Activated T-helper 1 cell treated with anti-CD3 and anti-CD28 coated beads, Interleukin-12 subunit alpha, Interleukin-12 subunit beta, Interleukin-2, Interleukin-4 antibody, amounts not matched to agents 30 ng/mL and 10 ng/mL and 1 ng/mL, durations not matched to agents 14 hours and 24 hours and 36 hours (primary cell): ENCODE measurements at regions of chr22 and their contacts with region 1.

Region 1: GRCh38 chr22:36180038-36180880 is 19.7 kb upstream of the APOL3 start:
- DNase-seq: peak; percentile 62
- H3K4me3 Mint-ChIP-seq: no peak overlapping the region
- H3K27ac Mint-ChIP-seq: no peak overlapping the region
- H3K4me1 Mint-ChIP-seq: peaks cover 5% of the 10 kb centered on the region
- H3K27me3 Mint-ChIP-seq: no peaks in the 10 kb centered on the region

Region 2: DNA sequence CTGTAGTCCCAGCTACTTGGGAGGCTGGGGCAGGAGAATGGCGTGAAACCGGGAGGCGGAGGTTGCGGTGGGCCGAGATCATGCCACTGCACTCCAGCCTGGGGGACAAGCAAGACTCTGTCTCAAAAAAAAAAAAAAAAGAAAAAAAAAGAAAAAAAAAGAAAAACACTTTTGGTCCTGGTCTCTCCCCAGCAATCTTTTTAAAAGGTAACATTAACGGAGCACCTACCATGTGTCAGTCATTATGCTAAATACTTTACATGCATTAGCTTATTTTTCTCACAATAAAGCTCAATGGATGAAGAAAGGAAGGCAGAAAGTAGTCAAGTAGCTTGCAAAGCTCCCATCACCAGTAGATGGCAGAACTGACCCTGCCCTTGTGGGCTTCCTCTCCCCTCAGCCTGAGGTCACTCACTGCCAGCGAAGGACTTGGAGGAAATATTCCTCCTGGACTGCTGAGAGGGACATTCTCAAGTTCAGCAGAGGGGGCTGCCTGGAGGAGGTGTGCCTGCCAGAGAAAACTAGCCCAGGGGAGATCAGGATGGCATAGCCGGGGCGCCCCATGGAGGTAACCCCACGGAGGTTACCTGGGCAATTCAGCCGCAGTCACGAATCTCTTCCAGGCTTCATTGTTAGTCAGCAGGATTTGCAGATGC is 35.2 kb before region 1 on chr22:
- intact Hi-C with region 1: loop called (anchors 1 kb)
- DNase-seq: no peak
- H3K4me3 Mint-ChIP-seq: no peak overlapping the region
- H3K27ac Mint-ChIP-seq: peak overlapping the region; percentile 5
- H3K4me1 Mint-ChIP-seq: peaks cover 10% of the 10 kb centered on the region
- H3K27me3 Mint-ChIP-seq: no peaks in the 10 kb centered on the region

Region 3: GRCh38 chr22:36156515-36157419 is 23.5 kb before region 1 on chr22:
- intact Hi-C with region 1: loop called (anchors 1 kb)
- DNase-seq: peak; percentile 37
- H3K4me3 Mint-ChIP-seq: peak overlapping the region; percentile 95
- H3K27ac Mint-ChIP-seq: peak overlapping the region; percentile 95
- H3K4me1 Mint-ChIP-seq: peaks cover 90% of the 10 kb centered on the region
- H3K27me3 Mint-ChIP-seq: no peaks in the 10 kb centered on the region